GM12878 (cell line): ENCODE measurements at regions of chr17 and their contacts with region 1.

Region 1: DNA sequence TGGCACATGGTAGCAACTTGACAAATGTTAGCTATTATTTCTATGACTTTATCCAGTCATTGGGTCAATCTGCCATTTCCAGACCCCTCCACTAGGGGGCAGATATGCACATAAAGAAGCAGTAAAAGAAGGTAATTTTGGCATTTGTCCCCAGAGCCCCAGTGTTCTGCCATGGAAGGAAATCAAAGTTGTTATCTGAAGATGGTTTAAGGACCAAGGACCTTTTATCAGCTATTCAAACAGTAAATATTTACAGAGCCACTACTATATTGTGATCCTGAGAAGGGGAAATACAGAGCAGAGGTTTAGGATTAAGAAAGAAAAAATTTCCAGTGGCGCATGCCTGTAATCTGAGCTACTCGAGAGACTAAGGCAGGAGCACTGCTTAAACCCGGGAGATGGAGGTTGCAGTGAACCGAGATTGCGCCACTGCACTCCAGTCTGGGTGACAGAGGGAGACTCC is 20.0 kb downstream of the TRAF4 start:
- DNase-seq: no peak
- ATAC-seq: peak; percentile 81
- H3K4me3 ChIP-seq: no peak overlapping the region
- H3K27ac ChIP-seq: peak overlapping the region; percentile 48
- H3K4me1 ChIP-seq: peaks cover 15% of the 10 kb centered on the region
- H3K27me3 ChIP-seq: no peaks in the 10 kb centered on the region
- CTCF ChIP-seq: peak; percentile 78 to 94 (median 82)
- EP300 ChIP-seq: no peak
- POLR2A ChIP-seq: no peak
- RAD21 ChIP-seq: peak; percentile 87

Region 2: DNA sequence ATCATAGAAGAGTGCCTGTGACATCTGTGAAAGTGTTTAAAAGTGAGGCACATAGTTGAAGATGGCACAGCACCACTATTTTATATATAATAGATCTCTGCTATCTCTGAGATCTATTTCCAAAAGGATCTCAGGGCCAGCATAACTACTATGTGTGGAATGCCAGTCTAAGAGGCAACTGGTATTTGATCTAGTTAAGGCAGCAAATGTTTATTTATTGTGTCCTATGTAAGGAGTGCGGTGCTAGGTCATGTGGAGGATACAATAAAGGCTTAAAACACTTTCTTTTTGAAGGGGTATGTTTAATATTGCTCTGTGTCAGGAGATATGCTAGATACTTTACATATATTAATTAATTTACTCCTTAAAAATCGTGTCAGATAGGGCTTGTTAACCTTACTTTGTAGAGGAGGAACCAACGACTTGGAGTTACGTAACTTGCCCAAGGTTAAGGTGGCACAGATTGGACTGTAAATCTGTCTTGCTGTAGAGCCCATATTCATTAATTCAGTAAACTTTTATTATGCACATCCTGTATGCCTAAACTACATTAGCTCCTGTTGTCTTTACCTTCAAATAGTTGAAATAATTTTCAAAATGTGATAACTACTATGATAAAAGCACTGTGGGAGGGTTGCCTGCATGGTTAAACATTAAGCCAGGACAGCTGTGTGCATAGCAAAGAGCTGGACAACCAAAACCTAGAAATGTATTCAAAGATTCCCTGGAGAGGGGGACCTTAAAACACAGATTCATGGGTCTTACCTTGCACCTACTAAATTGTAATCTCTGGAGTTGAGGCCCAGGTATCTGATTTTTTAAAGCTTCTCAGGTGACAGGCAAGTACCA is 638.1 kb before region 1 on chr17:
- CTCF ChIA-PET with region 1: no interaction called
- POLR2A ChIA-PET with region 1: no interaction called
- RAD21 ChIA-PET with region 1: no interaction called
- SMC1A ChIA-PET with region 1: no interaction called
- in situ Hi-C with region 1: no loop called
- intact Hi-C with region 1: no loop called
- DNase-seq: no peak
- ATAC-seq: no peak
- H3K4me3 ChIP-seq: no peak overlapping the region
- H3K27ac ChIP-seq: no peak overlapping the region
- H3K4me1 ChIP-seq: no peaks in the 10 kb centered on the region
- H3K27me3 ChIP-seq: no peaks in the 10 kb centered on the region
- CTCF ChIP-seq: no peak
- EP300 ChIP-seq: no peak
- POLR2A ChIP-seq: no peak
- RAD21 ChIP-seq: no peak

Region 3: DNA sequence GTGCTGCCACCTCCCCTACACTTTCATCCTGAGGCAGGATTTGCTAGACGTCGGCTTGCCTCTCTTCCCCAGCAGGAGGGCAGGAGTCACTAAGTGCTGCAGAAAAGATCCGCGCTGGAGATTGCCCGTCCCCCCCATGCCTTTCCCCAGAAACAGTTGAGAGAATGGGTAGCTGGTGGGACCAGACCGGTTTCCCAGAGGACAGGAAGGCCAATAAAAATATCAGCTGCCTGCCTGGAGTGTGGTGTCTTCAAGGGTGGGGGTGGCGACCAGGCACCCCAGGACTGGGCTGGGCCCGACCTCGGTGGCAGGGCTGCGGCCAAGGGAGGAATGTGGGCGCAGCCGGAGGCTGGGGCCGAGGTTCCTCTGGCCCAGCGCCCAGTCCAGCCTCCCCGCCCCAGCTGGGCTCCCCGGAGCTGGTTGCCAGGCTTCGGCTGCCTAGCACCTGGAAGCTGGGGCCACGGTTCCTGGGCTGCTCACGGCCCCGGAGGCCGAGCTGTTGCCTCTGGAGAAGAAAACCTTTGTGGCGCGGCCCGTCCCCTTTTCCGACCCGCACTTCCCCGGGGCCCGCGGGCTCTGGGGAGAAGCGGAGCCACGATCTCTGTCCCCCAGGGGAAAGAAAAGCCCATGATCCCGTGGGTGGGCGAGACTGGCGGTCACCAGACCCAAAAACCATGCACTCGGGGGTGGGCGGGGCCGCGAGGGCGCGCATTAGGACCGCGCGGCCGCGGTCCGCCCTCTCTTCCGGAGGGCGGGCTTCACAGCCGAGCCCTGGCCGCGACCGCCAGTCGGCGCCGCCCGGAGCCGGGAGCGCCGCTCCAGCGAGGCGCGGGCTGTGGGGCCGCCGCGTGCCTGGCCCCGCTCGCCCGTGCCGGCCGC is 20.4 kb before region 1 on chr17 and contains the start of gene TRAF4:
- CTCF ChIA-PET with region 1: interaction called, 86 read pairs
- POLR2A ChIA-PET with region 1: interaction called, 4 read pairs
- RAD21 ChIA-PET with region 1: interaction called, 8 read pairs
- SMC1A ChIA-PET with region 1: interaction called, 46 read pairs
- in situ Hi-C with region 1: no loop called
- intact Hi-C with region 1: no loop called
- DNase-seq: no peak
- ATAC-seq: peak; percentile 69
- H3K4me3 ChIP-seq: peak within 1 kb of the TSS; percentile 92
- H3K27ac ChIP-seq: peak within 1 kb of the TSS; percentile 96
- H3K4me1 ChIP-seq: peaks cover 72% of the 10 kb centered on the region
- H3K27me3 ChIP-seq: no peaks in the 10 kb centered on the region
- CTCF ChIP-seq: peak in 1 of 3 experiments; percentile 26; a peak in 1 of 6 replicates
- EP300 ChIP-seq: peak; percentile 17 to 53; a peak in 1 of 4 replicates
- POLR2A ChIP-seq: peak; percentile 97
- RAD21 ChIP-seq: no peak
- polyA plus RNA-seq, gene TRAF4: 3.7 to 8.2 TPM

Region 4: GRCh38 chr17:28818819-28819221 is 55.0 kb after region 1 on chr17:
- CTCF ChIA-PET with region 1: interaction called, 11 read pairs
- POLR2A ChIA-PET with region 1: no interaction called
- RAD21 ChIA-PET with region 1: interaction called, 6 read pairs
- SMC1A ChIA-PET with region 1: no interaction called
- in situ Hi-C with region 1: no loop called
- intact Hi-C with region 1: no loop called
- DNase-seq: no peak
- ATAC-seq: no peak
- H3K4me3 ChIP-seq: no peak overlapping the region
- H3K27ac ChIP-seq: no peak overlapping the region
- H3K4me1 ChIP-seq: no peaks in the 10 kb centered on the region
- H3K27me3 ChIP-seq: no peaks in the 10 kb centered on the region
- CTCF ChIP-seq: no peak
- EP300 ChIP-seq: no peak
- POLR2A ChIP-seq: no peak
- RAD21 ChIP-seq: no peak

Region 5: GRCh38 chr17:28854457-28855350 is 90.9 kb after region 1 on chr17 and contains the start of gene ERAL1:
- CTCF ChIA-PET with region 1: interaction called, 26 read pairs
- POLR2A ChIA-PET with region 1: no interaction called
- RAD21 ChIA-PET with region 1: interaction called, 12 read pairs
- SMC1A ChIA-PET with region 1: interaction called, 5 read pairs
- in situ Hi-C with region 1: no loop called
- intact Hi-C with region 1: no loop called
- DNase-seq: peak; percentile 73
- ATAC-seq: peak; percentile 100
- H3K4me3 ChIP-seq: peak within 1 kb of the TSS; percentile 78
- H3K27ac ChIP-seq: peak within 1 kb of the TSS; percentile 86
- H3K4me1 ChIP-seq: peaks cover 14% of the 10 kb centered on the region
- H3K27me3 ChIP-seq: no peaks in the 10 kb centered on the region
- CTCF ChIP-seq: no peak
- EP300 ChIP-seq: no peak
- POLR2A ChIP-seq: peak; percentile 95
- RAD21 ChIP-seq: no peak
- polyA plus RNA-seq, gene ERAL1: 165 to 175 TPM

Region 6: DNA sequence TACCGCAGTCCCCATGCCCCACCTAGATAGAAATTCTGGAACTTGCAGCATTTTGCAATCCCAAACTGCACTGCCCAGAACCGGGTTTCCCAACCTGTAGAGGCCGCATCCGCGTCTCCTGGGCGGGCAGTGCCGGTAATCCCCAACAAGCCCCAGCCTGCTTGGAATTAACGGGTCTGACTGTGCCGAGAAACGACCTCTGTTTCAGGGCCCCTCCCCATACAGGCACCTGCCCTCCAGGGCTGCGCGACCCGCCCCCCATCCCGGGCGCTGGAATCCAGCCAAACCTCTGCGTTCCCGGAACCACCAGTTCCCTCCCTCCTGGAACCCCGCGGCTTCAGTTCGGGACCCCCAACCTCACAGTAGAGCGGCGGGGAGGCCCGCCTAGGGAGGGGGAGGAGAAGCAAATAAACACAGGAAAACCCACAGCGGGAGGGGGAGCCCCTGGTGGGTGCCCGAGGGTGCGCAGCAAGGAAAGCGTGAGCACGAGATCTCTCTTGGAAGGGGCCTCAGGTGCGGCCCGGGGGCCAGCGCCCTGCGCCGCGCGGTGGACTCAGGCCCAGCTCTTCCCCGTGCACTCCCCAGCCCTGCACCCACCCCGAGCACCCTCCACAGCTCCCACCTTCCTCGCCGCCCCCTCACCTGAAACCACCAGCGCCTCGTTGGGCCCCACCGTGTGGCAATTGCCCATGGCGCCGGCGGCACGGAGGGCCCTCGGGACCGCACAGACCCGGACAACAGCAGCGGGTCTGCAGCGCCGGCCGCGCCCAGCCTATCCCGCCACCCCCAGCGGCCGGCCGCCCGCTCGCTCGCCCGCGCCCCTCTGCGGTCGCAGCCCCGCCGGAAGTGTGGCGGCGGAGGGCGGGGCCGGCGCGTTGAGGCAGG is 133.3 kb after region 1 on chr17 and contains the start of gene FLOT2:
- CTCF ChIA-PET with region 1: interaction called, 175 read pairs
- POLR2A ChIA-PET with region 1: interaction called, 4 read pairs
- RAD21 ChIA-PET with region 1: interaction called, 29 read pairs
- SMC1A ChIA-PET with region 1: interaction called, 37 read pairs
- in situ Hi-C with region 1: no loop called
- intact Hi-C with region 1: loop called (anchors 1 kb)
- DNase-seq: no peak
- ATAC-seq: peak; percentile 43
- H3K4me3 ChIP-seq: peak within 1 kb of the TSS; percentile 92
- H3K27ac ChIP-seq: peak within 1 kb of the TSS; percentile 72
- H3K4me1 ChIP-seq: peaks cover 39% of the 10 kb centered on the region
- H3K27me3 ChIP-seq: no peaks in the 10 kb centered on the region
- CTCF ChIP-seq: peak in 2 of 3 experiments; percentile 11 to 17; a peak in 2 of 6 replicates
- EP300 ChIP-seq: no peak
- POLR2A ChIP-seq: peak; percentile 71
- RAD21 ChIP-seq: no peak
- polyA plus RNA-seq, gene FLOT2: 56.8 to 121 TPM

Region 7: GRCh38 chr17:28937044-28937729 is 173.4 kb after region 1 on chr17:
- CTCF ChIA-PET with region 1: interaction called, 24 read pairs
- POLR2A ChIA-PET with region 1: no interaction called
- RAD21 ChIA-PET with region 1: interaction called, 3 read pairs
- SMC1A ChIA-PET with region 1: interaction called, 5 read pairs
- in situ Hi-C with region 1: no loop called
- intact Hi-C with region 1: no loop called
- DNase-seq: no peak
- ATAC-seq: no peak
- H3K4me3 ChIP-seq: no peak overlapping the region
- H3K27ac ChIP-seq: no peak overlapping the region
- H3K4me1 ChIP-seq: peaks cover 11% of the 10 kb centered on the region; the same call in 1 of the 2 replicates
- H3K27me3 ChIP-seq: no peaks in the 10 kb centered on the region
- CTCF ChIP-seq: no peak
- EP300 ChIP-seq: no peak
- POLR2A ChIP-seq: no peak
- RAD21 ChIP-seq: no peak